ENCODE measurements at regions of chr3 and their contacts with region 1.

Region 1: GRCh38 chr3:158672293-158673176 is at the start of gene LXN:
- DNase-seq: peak; percentile 96
- total RNA-seq, gene LXN: 44.8 and 73.9 TPM in 2 replicates

Region 2: DNA sequence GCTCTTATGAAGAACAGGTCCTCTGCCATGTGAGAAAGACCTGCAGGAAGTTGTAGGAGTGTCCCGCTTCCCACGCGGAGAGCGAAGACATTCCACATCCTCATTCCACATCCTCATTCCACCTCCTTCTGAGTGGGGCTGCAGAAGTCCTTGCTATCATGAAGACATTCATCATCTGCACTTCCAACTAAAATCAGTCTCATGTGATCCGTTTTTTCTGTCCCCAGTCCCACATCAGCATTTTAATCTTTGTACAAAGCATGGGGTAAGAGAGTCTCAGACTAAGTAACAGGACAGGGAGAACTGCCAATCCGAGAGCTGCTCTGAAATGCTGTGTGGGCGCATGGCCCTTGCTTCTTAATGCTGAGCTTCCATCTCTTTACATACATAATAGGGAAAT is 335.4 kb before region 1 on chr3:
- in situ Hi-C with region 1: no loop called
- DNase-seq: no peak

Region 3: GRCh38 chr3:158775426-158776410 is 103.2 kb after region 1 on chr3:
- in situ Hi-C with region 1: loop called (anchors 5 kb)
- DNase-seq: peak; percentile 55